Calu3 (cell line): ENCODE measurements at regions of chr4 and their contacts with region 1.

Region 1: GRCh38 chr4:75673027-75673958 is at the start of gene G3BP2:
- DNase-seq: peak; percentile 92
- H3K4me3 Mint-ChIP-seq: peak within 1 kb of the TSS; percentile 99
- H3K27ac Mint-ChIP-seq: peak within 1 kb of the TSS; percentile 97
- H3K4me1 Mint-ChIP-seq: peaks cover 31% of the 10 kb centered on the region
- H3K27me3 Mint-ChIP-seq: no peaks in the 10 kb centered on the region
- CTCF ChIP-seq: no peak
- total RNA-seq, gene G3BP2: 122 and 128 TPM in 2 replicates

Region 2: GRCh38 chr4:75724066-75724866 is 51.0 kb after region 1 on chr4 and contains the start of gene USO1:
- CTCF ChIA-PET with region 1: interaction called, 4 read pairs
- intact Hi-C with region 1: loop called (anchors 5 kb)
- DNase-seq: peak; percentile 97
- H3K4me3 Mint-ChIP-seq: peak within 1 kb of the TSS; percentile 91
- H3K27ac Mint-ChIP-seq: peak within 1 kb of the TSS; percentile 96
- H3K4me1 Mint-ChIP-seq: peaks cover 29% of the 10 kb centered on the region
- H3K27me3 Mint-ChIP-seq: no peaks in the 10 kb centered on the region
- CTCF ChIP-seq: peak; percentile 44
- total RNA-seq, gene USO1: 45.2 and 45.4 TPM in 2 replicates